Activated CD4-positive, alpha-beta T cell treated with anti-CD3 and anti-CD28 coated beads for 36 hours (primary cell): ENCODE measurements at regions of chr20 and their contacts with region 1.

Region 1: GRCh38 chr20:24992487-24993205 is at the start of gene APMAP:
- DNase-seq: peak; percentile 98
- ATAC-seq: peak; percentile 95
- H3K4me3 Mint-ChIP-seq: peak within 1 kb of the TSS; percentile 97
- H3K27ac Mint-ChIP-seq: peak within 1 kb of the TSS; percentile 91
- H3K4me1 Mint-ChIP-seq: peaks cover 48% of the 10 kb centered on the region
- H3K27me3 Mint-ChIP-seq: no peaks in the 10 kb centered on the region
- total RNA-seq, gene APMAP: 26.8 to 34.0 TPM

Region 2: GRCh38 chr20:23350196-23350903 is 1642.3 kb before region 1 on chr20 and contains the start of gene NXT1:
- CTCF ChIA-PET with region 1: no interaction called
- POLR2A ChIA-PET with region 1: no interaction called
- intact Hi-C with region 1: loop called in 1 of 2 experiments (anchors 5 kb)
- DNase-seq: peak; percentile 96
- ATAC-seq: peak; percentile 93
- H3K4me3 Mint-ChIP-seq: peak within 1 kb of the TSS; percentile 85
- H3K27ac Mint-ChIP-seq: peak within 1 kb of the TSS; percentile 100
- H3K4me1 Mint-ChIP-seq: peaks cover 24% of the 10 kb centered on the region
- H3K27me3 Mint-ChIP-seq: no peaks in the 10 kb centered on the region
- total RNA-seq, gene NXT1: 34.4 to 35.5 TPM

Region 3: GRCh38 chr20:24943201-24943600 is 49.4 kb before region 1 on chr20:
- CTCF ChIA-PET with region 1: no interaction called
- POLR2A ChIA-PET with region 1: no interaction called
- intact Hi-C with region 1: no loop called
- DNase-seq: no peak
- ATAC-seq: no peak
- H3K4me3 Mint-ChIP-seq: no peak overlapping the region
- H3K27ac Mint-ChIP-seq: no peak overlapping the region
- H3K4me1 Mint-ChIP-seq: peaks cover 10% of the 10 kb centered on the region
- H3K27me3 Mint-ChIP-seq: peaks cover 2% of the 10 kb centered on the region

Region 4: DNA sequence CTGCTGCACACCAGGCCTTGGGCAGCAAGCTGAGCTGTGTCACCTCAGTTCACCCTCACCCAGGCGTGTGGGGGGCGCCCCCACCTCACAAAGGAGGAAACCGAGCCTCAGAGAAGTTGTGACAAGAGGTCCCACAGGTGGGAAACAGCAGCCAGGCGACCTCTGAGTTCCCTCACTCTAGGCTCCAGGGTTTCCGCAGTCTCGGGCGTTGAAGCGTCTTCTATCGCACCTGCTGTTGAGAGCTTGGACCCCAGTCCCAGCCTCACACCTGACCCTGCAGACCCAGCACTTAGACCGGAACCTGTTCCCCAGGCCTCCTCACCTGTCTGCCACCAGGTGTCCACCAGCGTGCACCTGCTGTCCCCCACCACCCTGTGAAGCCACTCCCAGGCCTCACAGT is 22.2 kb after region 1 on chr20:
- CTCF ChIA-PET with region 1: no interaction called
- POLR2A ChIA-PET with region 1: no interaction called
- intact Hi-C with region 1: no loop called
- DNase-seq: no peak
- ATAC-seq: no peak
- H3K4me3 Mint-ChIP-seq: no peak overlapping the region
- H3K27ac Mint-ChIP-seq: no peak overlapping the region
- H3K4me1 Mint-ChIP-seq: no peaks in the 10 kb centered on the region
- H3K27me3 Mint-ChIP-seq: no peaks in the 10 kb centered on the region

Region 5: DNA sequence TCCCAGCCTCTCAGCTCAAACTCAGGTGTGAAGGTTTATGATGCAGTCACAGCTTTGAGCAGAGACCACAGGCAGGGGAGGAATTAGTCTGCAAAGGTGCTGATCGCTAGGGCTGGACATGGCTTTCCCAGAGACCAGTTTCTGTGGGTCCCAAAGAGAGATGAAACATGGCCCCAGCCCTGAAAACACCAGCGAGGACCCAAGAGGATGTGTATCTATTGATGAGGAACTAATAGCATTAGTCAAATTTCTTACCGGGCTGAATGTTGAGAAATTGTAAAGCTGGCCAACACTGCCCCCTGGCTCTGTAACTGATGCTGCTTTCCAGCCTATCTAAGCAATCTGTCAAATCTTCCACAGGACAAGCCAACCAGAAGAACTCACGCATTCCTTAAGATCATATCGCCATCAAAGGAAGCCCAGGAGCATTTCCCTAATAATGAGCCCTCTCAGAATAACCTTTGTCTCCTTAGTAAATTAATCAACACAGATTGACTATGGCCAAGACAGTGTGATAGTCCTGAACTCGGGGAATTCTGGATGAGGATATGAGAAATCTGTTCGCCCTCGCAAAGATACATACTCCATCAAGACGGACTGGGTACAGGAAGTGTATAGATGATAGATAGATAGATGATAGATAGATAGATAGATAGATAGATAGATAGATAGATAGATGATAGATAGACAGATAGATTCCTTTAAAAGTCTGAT is 73.1 kb after region 1 on chr20:
- CTCF ChIA-PET with region 1: interaction called, 96 read pairs
- POLR2A ChIA-PET with region 1: interaction called, 4 read pairs
- intact Hi-C with region 1: loop called (anchors 1 kb)
- DNase-seq: peak; percentile 75
- ATAC-seq: peak; percentile 79
- H3K4me3 Mint-ChIP-seq: no peak overlapping the region
- H3K27ac Mint-ChIP-seq: no peak overlapping the region
- H3K4me1 Mint-ChIP-seq: no peaks in the 10 kb centered on the region
- H3K27me3 Mint-ChIP-seq: peaks cover 19% of the 10 kb centered on the region

Region 6: GRCh38 chr20:25195014-25195961 is 202.6 kb after region 1 on chr20 and contains the start of gene ENTPD6:
- CTCF ChIA-PET with region 1: no interaction called
- POLR2A ChIA-PET with region 1: no interaction called
- intact Hi-C with region 1: loop called (anchors 1 to 5 kb)
- DNase-seq: peak; percentile 94
- ATAC-seq: peak; percentile 86
- H3K4me3 Mint-ChIP-seq: peak within 1 kb of the TSS; percentile 84
- H3K27ac Mint-ChIP-seq: peak within 1 kb of the TSS; percentile 85
- H3K4me1 Mint-ChIP-seq: peaks cover 39% of the 10 kb centered on the region
- H3K27me3 Mint-ChIP-seq: no peaks in the 10 kb centered on the region
- total RNA-seq, gene ENTPD6: 34.3 to 41.5 TPM

Region 7: DNA sequence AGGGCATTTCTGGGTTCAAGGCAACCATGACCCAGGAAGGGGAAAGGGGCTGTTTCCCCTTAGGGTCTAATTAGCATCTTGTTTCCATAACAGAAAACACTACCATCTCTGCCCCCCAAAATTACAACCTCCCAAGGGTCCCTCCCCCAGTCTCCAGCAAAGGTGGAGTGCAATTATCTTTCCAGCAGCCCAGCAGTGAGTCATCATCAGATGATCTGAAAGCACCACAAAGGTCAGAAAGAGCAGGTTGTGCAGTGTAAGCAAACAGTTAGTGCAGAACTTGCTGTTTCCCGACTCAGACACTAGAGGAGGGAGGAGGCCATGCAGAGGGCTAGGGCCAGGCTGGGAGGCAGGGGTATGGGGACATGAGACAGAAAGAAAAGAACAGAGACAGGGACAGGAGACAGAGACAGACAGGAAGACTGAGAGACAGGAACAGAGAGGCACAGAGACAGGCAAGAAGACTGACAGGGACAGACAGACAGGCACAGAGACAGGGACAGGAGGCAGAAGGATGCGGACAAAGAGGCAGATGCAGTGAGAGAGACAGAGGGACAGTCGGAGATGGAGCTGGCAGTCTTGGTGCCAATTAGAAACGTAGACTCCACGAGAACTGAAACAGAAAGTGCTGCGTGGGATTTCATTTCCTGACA is 317.7 kb after region 1 on chr20:
- CTCF ChIA-PET with region 1: no interaction called
- POLR2A ChIA-PET with region 1: no interaction called
- intact Hi-C with region 1: loop called in 1 of 2 experiments (anchors 2 kb)
- DNase-seq: peak; percentile 79
- ATAC-seq: peak; percentile 97
- H3K4me3 Mint-ChIP-seq: peak overlapping the region; percentile 59
- H3K27ac Mint-ChIP-seq: peak overlapping the region; percentile 94
- H3K4me1 Mint-ChIP-seq: peaks cover 35% of the 10 kb centered on the region
- H3K27me3 Mint-ChIP-seq: no peaks in the 10 kb centered on the region

Region 8: GRCh38 chr20:25407311-25408169 is 414.9 kb after region 1 on chr20 and contains the start of gene GINS1:
- CTCF ChIA-PET with region 1: interaction called, 4 read pairs
- POLR2A ChIA-PET with region 1: no interaction called
- intact Hi-C with region 1: loop called (anchors 1 to 5 kb)
- DNase-seq: peak; percentile 92
- ATAC-seq: peak; percentile 92
- H3K4me3 Mint-ChIP-seq: peak within 1 kb of the TSS; percentile 78
- H3K27ac Mint-ChIP-seq: peak within 1 kb of the TSS; percentile 94
- H3K4me1 Mint-ChIP-seq: peaks cover 16% of the 10 kb centered on the region
- H3K27me3 Mint-ChIP-seq: no peaks in the 10 kb centered on the region
- total RNA-seq, gene GINS1: 24.6 to 32.7 TPM

Region 9: GRCh38 chr20:25696384-25697131 is 703.9 kb after region 1 on chr20 and contains the start of gene ZNF337:
- CTCF ChIA-PET with region 1: no interaction called
- POLR2A ChIA-PET with region 1: no interaction called
- intact Hi-C with region 1: loop called in 1 of 2 experiments (anchors 5 kb)
- DNase-seq: peak; percentile 97
- ATAC-seq: peak; percentile 97
- H3K4me3 Mint-ChIP-seq: peak within 1 kb of the TSS; percentile 83
- H3K27ac Mint-ChIP-seq: peak within 1 kb of the TSS; percentile 84
- H3K4me1 Mint-ChIP-seq: peaks cover 41% of the 10 kb centered on the region
- H3K27me3 Mint-ChIP-seq: no peaks in the 10 kb centered on the region
- total RNA-seq, gene ZNF337: 12.6 TPM